Sigmoid colon (tissue), 7 donors: ENCODE measurements at regions of chr16 and their contacts with region 1.

Region 1: GRCh38 chr16:89873972-89874689 is 739 bp downstream of the TCF25 start:
- DNase-seq: peak; percentile 98
- H3K4me3 ChIP-seq: peak overlapping the region; percentile 84 to 95 (median 91)
- H3K27ac ChIP-seq: peak overlapping the region; percentile 99 to 100 (median 100)
- H3K4me1 ChIP-seq: peaks cover 0 to 28% (median 22%) of the 10 kb centered on the region in 4 donors
- H3K27me3 ChIP-seq: no peaks in the 10 kb centered on the region
- CTCF ChIP-seq: no peak
- EP300 ChIP-seq: peak in 1 of 4 donors; percentile 72
- POLR2A ChIP-seq: no peak

Region 2: GRCh38 chr16:89686520-89687091 is 187.5 kb before region 1 on chr16 and contains the start of gene CDK10:
- intact Hi-C with region 1: loop called (anchors 5 kb)
- DNase-seq: peak; percentile 94
- H3K4me3 ChIP-seq: peak within 1 kb of the TSS; percentile 85 to 94 (median 88)
- H3K27ac ChIP-seq: peak within 1 kb of the TSS; percentile 88 to 92 (median 89)
- H3K4me1 ChIP-seq: peaks cover 0 to 19% (median 14%) of the 10 kb centered on the region in 4 donors
- H3K27me3 ChIP-seq: no peaks in the 10 kb centered on the region
- CTCF ChIP-seq: no peak
- EP300 ChIP-seq: no peak
- POLR2A ChIP-seq: peak; percentile 33 to 61
- total RNA-seq, gene CDK10: 17.8 to 62.3 (median 35.2) TPM

Region 3: GRCh38 chr16:89815639-89816348 is 58.3 kb before region 1 on chr16:
- intact Hi-C with region 1: loop called (anchors 5 kb)
- DNase-seq: no peak
- H3K4me3 ChIP-seq: peak overlapping the region in 3 of 4 donors; percentile 62 to 76 (median 69)
- H3K27ac ChIP-seq: peak overlapping the region in 1 of 4 donors; percentile 91
- H3K4me1 ChIP-seq: peaks cover 0 to 19% (median 16%) of the 10 kb centered on the region in 4 donors
- H3K27me3 ChIP-seq: peaks cover 0 to 15% (median 0%) of the 10 kb centered on the region in 3 donors
- CTCF ChIP-seq: no peak
- EP300 ChIP-seq: no peak
- POLR2A ChIP-seq: no peak